Right ventricle myocardium inferior (tissue), 1 donor: ENCODE measurements at regions of chr2 and their contacts with region 1.

Region 1: DNA sequence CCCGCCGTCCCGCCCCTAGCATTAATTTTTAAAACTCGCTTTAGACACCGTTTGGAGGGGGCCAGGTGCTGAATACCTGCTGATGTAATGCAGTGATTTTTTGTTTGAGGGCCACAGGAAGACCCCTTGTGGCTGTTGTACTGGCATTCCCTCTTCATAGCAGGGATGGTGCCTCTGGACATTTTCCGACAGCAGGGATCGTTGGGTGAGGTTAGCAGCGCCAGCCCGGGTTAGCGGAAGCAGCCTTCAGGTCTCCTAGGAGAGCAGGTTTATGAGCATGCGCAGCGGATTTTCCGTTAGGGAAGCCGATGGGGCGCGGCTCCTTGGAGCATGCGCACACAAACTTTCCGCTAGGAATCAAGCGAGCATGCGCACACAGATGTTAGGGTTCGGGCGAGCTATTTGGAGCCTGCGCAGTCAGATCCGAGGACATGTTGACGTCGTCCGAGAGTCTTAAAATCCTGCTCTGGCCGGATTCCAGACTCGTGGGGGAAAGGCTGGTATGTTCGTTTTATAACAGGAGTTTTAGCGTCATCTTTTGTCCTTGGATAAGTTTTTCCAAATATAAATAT is 17.2 kb upstream of the C2orf74 start:
- DNase-seq: peak; percentile 97
- ATAC-seq: peak; percentile 99

Region 2: DNA sequence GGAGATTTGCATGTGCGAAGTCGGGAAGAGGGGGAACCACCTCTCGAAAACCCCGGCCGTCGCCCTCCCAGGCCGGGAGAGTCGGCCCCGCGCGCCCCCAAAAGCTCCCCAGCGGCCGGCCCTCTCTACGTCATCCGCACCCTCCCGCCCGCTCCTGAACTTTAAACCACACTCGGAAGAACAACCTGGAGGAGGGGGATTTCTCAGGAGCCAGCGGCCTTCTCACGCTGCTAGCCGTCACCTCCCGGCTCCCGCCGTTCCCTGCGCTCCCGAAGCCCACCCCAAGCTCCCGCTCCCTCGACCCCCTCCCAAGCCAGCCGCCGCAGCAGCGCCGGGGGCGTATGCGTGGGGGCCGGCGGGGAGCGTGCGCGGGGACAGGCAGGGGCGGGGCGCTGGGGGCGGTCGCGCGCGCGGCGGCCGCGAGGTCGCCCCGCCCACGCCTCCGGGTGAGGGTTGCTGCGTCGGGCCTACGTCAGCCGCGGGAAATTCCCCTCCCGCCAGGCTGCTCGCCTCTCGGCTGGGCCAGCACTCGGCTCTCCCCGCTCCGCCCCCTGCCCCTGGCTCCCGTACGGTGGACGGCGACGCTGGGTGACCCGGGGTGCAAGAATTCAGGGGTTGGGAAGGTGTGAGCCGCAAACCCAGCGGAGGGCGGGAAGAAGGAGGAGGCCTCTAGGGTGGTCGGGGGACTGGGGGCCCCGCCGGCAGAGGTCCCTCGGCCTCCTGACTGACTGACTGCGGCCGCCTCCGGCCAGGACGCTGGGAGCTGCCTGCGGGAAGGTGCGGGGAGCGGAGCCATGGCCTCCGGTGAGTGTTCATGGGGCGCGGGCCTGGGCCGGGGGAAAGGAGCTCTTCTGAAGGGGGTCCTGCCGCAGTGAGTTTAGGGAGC is 263.5 kb before region 1 on chr2 and contains the start of gene REL:
- intact Hi-C with region 1: loop called (anchors 10 kb)
- DNase-seq: peak; percentile 94
- ATAC-seq: peak; percentile 97
- total RNA-seq, gene REL: 5.3 TPM

Region 3: DNA sequence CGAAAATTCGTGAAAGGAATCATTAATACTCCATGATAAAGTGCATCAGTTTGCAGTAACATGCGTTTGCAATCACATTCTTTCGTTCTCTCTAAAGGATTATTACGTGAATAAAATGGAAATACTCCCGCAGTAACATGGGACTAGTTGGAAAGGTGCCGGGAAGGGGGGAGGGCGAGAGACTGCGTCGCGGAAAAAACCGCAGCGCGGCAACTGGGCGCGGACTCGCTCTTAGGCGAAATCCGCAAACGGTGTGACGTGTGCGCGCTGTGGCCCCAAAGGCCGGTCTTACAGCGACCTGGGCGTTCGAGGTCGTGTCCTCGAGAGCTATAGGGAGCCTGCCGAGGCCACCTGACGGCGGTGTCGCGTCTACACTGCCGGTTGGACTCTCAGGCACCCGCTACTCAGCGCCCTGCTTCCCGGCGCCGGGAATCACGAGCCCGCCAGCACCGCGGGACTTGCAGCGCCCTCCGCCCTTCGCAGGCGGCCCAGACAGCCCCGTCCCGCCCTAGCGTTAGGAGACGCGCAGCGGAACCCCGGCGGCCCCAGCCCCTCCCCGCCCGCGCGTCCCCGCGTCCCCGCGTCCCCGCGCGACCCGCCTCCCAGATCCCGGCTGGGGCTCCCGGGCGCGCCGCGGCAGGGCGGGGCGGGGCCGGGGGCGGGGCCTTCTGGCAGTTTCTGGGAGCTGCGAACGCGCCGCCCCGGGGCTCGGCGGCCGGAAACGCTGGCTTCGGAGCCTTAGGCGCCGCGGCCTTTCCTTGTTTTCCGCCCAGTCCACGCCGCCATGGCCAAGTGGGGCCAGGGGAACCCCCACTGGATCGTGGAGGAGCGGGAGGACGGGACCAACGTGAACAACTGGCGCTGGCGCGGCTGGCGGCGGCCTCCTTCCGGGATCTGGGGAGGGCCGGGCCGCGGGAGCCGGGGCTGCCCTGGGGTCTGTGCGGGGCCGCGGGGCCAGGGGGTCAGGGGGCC is 32.3 kb after region 1 on chr2:
- intact Hi-C with region 1: loop called (anchors 1 kb)
- DNase-seq: peak; percentile 97
- ATAC-seq: peak; percentile 93